HEK293 (cell line): ENCODE measurements at regions of chr17 and their contacts with region 1.

Region 1: GRCh38 chr17:55750750-55751657 is at the start of gene PCTP:
- H3K4me3 ChIP-seq: peak within 1 kb of the TSS; percentile 87
- H3K27ac ChIP-seq: peak within 1 kb of the TSS; percentile 77
- H3K4me1 ChIP-seq: peaks cover 7% of the 10 kb centered on the region; the same call in 1 of the 2 replicates
- CTCF ChIP-seq: peak; percentile 54

Region 2: GRCh38 chr17:55622547-55622946 is 128.5 kb before region 1 on chr17:
- CTCF ChIA-PET with region 1: no interaction called
- POLR2A ChIA-PET with region 1: no interaction called
- H3K4me3 ChIP-seq: no peak overlapping the region
- H3K27ac ChIP-seq: no peak overlapping the region
- H3K4me1 ChIP-seq: no peaks in the 10 kb centered on the region
- CTCF ChIP-seq: no peak

Region 3: GRCh38 chr17:55726440-55726839 is 24.6 kb before region 1 on chr17:
- CTCF ChIA-PET with region 1: interaction called, 3 read pairs
- POLR2A ChIA-PET with region 1: interaction called, 22 read pairs
- H3K4me3 ChIP-seq: no peak overlapping the region
- H3K27ac ChIP-seq: no peak overlapping the region
- H3K4me1 ChIP-seq: peaks cover 39% of the 10 kb centered on the region
- CTCF ChIP-seq: no peak

Region 4: GRCh38 chr17:55735731-55736405 is 15.1 kb before region 1 on chr17:
- CTCF ChIA-PET with region 1: interaction called, 46 read pairs
- POLR2A ChIA-PET with region 1: interaction called, 21 read pairs
- H3K4me3 ChIP-seq: no peak overlapping the region
- H3K27ac ChIP-seq: no peak overlapping the region
- H3K4me1 ChIP-seq: peaks cover 28% of the 10 kb centered on the region
- CTCF ChIP-seq: peak; percentile 40; the same call in 1 of the 2 replicates